ENCODE measurements at regions of chr1 and their contacts with region 1.

Region 1: DNA sequence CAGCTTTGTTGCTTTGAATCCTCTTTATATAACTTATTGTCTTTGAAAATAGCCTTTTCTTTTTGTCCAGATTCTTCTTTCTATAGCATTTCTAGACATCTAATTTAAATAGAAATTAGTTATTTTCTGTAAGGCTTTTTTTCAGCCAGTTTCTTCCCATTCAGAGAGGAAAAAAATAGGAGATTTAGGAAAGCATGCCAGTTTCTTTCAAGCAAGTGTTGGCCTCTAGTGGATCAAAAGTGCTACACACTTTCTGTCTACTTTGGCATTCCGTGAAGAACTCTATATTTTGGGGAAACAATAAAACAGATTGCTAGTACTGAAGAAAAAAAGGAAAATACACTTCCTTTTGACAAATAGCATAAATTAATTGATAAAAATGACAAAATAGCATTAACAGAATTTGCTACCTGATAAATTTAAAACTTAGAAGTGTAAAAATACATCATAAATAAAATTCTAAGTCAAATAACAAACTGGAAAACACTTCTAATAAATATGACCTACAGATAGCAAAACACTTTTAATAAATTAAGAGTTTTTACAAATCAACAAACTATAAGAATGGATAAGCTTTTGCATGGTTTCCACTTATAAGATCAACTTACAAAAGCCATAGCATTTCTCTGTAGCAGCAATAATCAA is 13.1 kb upstream of the EXO1 start:
- DNase-seq: peak; percentile 80
- H3K4me3 ChIP-seq: no peak overlapping the region
- H3K27ac ChIP-seq: no peak overlapping the region
- H3K4me1 ChIP-seq: peaks cover 26% of the 10 kb centered on the region
- H3K27me3 ChIP-seq: no peaks in the 10 kb centered on the region

Region 2: GRCh38 chr1:241440904-241441303 is 394.0 kb before region 1 on chr1:
- in situ Hi-C with region 1: no loop called
- DNase-seq: no peak
- H3K4me3 ChIP-seq: no peak overlapping the region
- H3K27ac ChIP-seq: no peak overlapping the region
- H3K4me1 ChIP-seq: no peaks in the 10 kb centered on the region
- H3K27me3 ChIP-seq: peaks cover 4% of the 10 kb centered on the region; the same call in 1 of the 2 replicates

Region 3: DNA sequence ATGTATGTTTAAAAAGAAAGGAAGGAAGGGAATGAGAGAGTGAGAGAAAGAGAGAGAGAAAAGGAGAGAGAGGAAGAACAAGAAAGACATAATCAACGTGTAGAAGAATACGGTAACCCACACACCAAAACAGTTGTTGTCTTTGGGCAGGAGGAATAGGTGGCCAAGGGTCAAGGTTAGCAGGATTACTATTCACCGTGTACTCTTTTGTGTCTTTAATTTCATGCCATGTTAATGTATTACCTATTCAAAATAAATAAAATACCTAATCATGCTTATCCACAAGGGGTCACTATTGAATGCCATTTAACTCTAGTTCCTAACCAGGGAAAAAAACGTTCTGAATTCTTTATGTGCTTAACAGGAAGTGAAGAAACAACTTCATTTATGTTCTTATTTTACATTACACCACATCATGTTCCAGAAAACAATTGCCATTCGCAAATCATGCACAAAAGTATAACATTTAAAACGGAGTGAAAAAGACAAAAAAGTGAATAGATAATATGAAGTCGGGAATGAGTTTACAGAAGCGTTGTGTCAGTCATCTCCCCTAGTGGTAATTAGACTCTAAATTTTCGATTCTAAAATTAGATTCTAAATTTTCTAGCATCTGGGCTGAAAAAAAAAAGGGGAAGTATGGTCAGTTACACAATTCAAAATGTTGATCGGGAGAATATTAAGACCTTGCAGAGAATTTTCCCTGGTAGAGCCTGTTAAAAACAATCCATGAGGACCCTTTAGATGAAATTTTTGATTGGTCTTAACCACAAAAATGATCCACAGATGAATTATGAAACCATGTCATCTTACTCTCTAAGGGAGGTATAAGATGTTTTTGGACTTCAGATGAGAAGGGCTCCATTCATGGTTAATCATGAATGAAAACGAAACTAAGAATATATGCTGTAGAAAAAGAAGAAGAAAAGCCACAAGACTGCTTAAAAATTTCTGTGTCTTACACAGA is 303.4 kb before region 1 on chr1:
- in situ Hi-C with region 1: loop called (anchors 10 kb)
- DNase-seq: peak; percentile 84
- H3K4me3 ChIP-seq: peak overlapping the region; percentile 92
- H3K27ac ChIP-seq: peak overlapping the region; percentile 32
- H3K4me1 ChIP-seq: no peaks in the 10 kb centered on the region
- H3K27me3 ChIP-seq: no peaks in the 10 kb centered on the region

Region 4: GRCh38 chr1:241611063-241611462 is 223.8 kb before region 1 on chr1:
- in situ Hi-C with region 1: loop called (anchors 10 kb)
- DNase-seq: peak; percentile 69
- H3K4me3 ChIP-seq: no peak overlapping the region
- H3K27ac ChIP-seq: no peak overlapping the region
- H3K4me1 ChIP-seq: peaks cover 20% of the 10 kb centered on the region
- H3K27me3 ChIP-seq: no peaks in the 10 kb centered on the region